Ascending aorta (tissue), 2 donors: ENCODE measurements at regions of chr2 and their contacts with region 1.

Region 1: DNA sequence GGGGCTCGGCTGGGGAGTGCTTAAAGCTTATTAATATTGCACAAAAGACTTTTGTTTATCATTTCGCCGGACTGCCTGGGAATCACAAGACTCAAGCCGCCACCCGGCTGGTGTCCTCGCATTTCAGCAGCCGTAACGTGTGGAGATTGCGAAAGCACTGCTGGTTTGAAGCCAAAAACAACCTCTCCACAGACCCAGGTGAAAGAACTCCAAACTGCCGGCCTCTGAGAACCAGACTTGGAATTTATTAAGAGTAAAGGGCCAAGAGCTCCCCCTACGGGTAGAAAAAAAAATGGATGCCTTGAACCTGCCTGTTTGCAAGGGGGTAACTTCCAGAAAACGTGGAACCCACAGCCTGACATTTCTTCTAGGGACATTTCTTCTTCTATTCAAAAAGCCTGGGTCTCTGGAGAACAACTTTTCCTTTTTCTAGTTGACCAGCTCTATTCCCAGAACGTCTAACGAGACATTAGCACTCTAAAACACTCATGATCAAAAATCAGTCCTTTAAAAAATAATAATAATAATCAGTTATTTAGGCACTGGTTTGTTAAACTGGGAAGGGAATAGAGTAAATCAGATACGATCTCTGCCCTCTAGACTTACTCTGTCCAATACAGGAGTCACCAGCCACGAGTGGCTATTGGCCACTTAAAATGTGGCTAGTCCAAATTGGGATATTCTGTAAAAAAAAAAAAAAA is 216.3 kb downstream of the C1D start:
- DNase-seq: peak; percentile 66 to 93
- H3K4me3 ChIP-seq: peak overlapping the region; percentile 18 to 44
- H3K27ac ChIP-seq: peak overlapping the region; percentile 26 to 35
- H3K4me1 ChIP-seq: peaks cover 0 to 2% of the 10 kb centered on the region in 2 donors
- H3K27me3 ChIP-seq: no peaks in the 10 kb centered on the region
- CTCF ChIP-seq: peak; percentile 53 to 84 (median 67)

Region 2: DNA sequence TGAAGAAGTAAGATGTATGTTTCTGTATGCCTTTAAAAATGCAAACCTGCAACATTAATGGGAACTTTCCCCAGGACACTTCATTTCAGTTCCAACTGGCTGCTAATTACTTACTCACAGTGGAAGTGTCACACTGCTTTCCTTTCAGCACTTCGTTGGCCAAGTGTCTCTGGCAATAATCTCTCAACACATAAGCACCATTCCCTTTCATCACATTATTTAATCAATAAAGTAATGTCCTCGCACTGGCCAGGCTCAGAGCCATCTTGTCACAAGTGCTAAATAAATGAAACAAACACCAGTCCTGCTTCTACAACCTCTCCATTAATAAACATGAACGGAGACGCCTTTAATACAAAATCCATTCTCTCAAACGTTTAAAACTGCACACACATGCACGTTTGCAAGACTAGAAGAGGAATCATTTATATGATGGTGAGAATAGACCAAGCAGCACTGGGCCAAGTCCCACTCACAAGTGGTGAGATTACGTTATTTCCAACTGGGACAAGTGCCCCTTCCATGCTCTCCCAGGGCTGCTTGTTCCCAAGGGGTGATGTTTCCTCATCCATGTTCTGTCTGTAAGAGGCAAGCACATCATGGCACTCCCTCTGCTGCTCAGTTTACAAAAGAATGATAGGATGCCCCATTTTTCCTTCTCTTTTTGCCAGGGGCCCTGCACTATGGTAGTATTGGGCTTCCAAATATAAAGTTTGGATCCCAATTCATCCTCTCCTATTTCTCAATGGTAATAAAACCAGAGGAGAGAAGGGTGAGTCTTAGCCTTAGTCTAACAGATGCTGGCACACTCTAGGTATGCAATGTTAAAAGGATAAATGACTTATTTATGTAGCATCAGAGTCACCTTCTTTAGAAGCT is 506.1 kb before region 1 on chr2:
- intact Hi-C with region 1: no loop called
- DNase-seq: no peak
- H3K4me3 ChIP-seq: no peak overlapping the region
- H3K27ac ChIP-seq: no peak overlapping the region
- H3K4me1 ChIP-seq: no peaks in the 10 kb centered on the region
- H3K27me3 ChIP-seq: no peaks in the 10 kb centered on the region
- CTCF ChIP-seq: no peak

Region 3: GRCh38 chr2:67633212-67633856 is 213.2 kb before region 1 on chr2:
- intact Hi-C with region 1: no loop called
- DNase-seq: no peak
- H3K4me3 ChIP-seq: no peak overlapping the region
- H3K27ac ChIP-seq: no peak overlapping the region
- H3K4me1 ChIP-seq: no peaks in the 10 kb centered on the region
- H3K27me3 ChIP-seq: no peaks in the 10 kb centered on the region
- CTCF ChIP-seq: no peak

Region 4: DNA sequence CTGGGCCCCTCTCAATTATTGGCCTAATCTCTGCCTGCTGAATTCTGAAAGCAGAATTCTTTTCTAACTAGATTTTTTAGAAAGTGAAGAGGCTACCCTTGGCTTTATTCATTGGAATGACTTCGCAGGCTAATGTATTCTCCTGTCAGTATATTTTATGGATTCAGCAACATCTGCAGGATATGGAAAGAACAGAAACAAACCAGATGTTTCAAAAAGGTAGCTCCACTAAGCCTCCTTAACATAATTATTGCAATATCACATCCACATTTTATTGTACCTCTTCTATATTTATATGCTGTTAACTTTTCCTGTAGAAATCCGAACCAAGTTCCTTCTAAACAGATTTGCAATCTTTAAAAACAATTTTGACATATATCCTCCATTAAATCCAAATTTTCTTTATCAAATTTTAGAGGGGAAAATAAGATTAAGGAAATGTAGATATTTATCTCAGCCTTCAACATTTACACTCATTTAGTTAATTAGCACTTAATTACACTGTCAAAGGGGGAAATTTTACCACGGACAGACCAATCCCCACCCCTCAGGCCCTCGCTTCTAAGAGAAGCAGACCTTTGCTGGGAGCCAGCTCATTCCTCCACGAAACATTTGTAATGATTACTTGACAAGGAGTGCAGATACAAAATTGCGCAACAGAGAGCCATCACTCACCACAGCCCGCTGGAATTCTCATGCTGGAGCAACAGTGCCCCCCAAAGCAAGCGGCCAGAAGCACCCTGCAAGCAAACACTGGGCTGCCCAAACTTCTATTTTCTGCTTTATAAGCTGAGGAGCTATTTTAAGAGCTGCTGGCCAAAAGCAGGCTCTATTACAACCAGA is 196.0 kb before region 1 on chr2:
- intact Hi-C with region 1: loop called (anchors 1 kb)
- DNase-seq: peak; percentile 31 to 92
- H3K4me3 ChIP-seq: no peak overlapping the region
- H3K27ac ChIP-seq: peak overlapping the region; percentile 23 to 61
- H3K4me1 ChIP-seq: peaks cover 5 to 23% of the 10 kb centered on the region in 2 donors
- H3K27me3 ChIP-seq: no peaks in the 10 kb centered on the region
- CTCF ChIP-seq: peak; percentile 44 to 73 (median 65)

Region 5: GRCh38 chr2:67871686-67872412 is 25.3 kb after region 1 on chr2:
- intact Hi-C with region 1: loop called (anchors 2 kb)
- DNase-seq: peak; percentile 60 to 91
- H3K4me3 ChIP-seq: no peak overlapping the region
- H3K27ac ChIP-seq: peak overlapping the region; percentile 90 to 91
- H3K4me1 ChIP-seq: peaks cover 7 to 42% of the 10 kb centered on the region in 2 donors
- H3K27me3 ChIP-seq: no peaks in the 10 kb centered on the region
- CTCF ChIP-seq: no peak

Region 6: DNA sequence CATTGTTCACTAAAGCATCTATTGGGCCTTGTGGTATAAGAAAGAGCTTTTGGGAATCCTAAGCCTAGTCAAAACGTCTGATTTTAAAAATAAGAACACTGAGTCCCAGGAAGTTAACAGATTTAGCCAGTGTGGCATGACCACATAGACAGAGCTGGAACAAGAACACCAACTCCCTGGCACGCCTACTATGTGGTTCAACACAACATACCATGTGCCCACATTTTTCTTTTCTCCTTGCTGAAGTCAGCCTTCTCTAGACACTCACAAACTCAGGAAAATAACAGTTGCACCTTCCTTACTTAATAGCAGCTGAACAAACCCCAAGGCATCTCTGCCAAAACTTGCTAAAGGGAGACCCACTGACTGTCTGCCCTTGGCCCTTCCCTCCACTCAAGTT is 91.5 kb after region 1 on chr2:
- intact Hi-C with region 1: loop called (anchors 5 kb)
- DNase-seq: peak in 1 of 2 donors; percentile 83
- H3K4me3 ChIP-seq: no peak overlapping the region
- H3K27ac ChIP-seq: peak overlapping the region; percentile 77 to 78
- H3K4me1 ChIP-seq: peaks cover 5 to 15% of the 10 kb centered on the region in 2 donors
- H3K27me3 ChIP-seq: no peaks in the 10 kb centered on the region
- CTCF ChIP-seq: no peak

Region 7: GRCh38 chr2:68031542-68032160 is 185.1 kb after region 1 on chr2:
- intact Hi-C with region 1: loop called (anchors 2 kb)
- DNase-seq: no peak
- H3K4me3 ChIP-seq: no peak overlapping the region
- H3K27ac ChIP-seq: no peak overlapping the region
- H3K4me1 ChIP-seq: peaks cover 0 to 4% of the 10 kb centered on the region in 2 donors
- H3K27me3 ChIP-seq: no peaks in the 10 kb centered on the region
- CTCF ChIP-seq: peak; percentile 56 to 76 (median 74)

Region 8: DNA sequence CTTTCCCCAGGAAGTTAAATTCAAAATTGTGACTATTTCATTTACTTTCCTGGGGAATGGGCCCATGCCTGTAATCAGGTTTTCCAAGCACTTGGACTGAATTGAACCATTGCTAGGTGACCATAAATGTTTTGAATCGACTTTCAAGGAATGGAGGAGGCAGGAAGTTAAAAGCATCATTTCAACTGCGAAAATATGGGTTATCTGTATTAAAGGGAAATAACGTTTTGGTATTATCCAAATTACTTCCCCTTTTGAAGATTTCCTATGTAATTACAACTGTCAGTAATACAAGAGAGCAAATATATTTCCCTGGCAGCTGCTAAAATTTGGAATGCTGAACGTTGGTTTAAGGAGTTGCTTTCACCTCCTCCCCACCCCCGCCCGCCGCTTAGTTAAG is 330.1 kb after region 1 on chr2:
- intact Hi-C with region 1: no loop called
- DNase-seq: no peak
- H3K4me3 ChIP-seq: no peak overlapping the region
- H3K27ac ChIP-seq: no peak overlapping the region
- H3K4me1 ChIP-seq: no peaks in the 10 kb centered on the region
- H3K27me3 ChIP-seq: no peaks in the 10 kb centered on the region
- CTCF ChIP-seq: no peak